ENCODE measurements at regions of chr15 and their contacts with region 1.

Region 1: DNA sequence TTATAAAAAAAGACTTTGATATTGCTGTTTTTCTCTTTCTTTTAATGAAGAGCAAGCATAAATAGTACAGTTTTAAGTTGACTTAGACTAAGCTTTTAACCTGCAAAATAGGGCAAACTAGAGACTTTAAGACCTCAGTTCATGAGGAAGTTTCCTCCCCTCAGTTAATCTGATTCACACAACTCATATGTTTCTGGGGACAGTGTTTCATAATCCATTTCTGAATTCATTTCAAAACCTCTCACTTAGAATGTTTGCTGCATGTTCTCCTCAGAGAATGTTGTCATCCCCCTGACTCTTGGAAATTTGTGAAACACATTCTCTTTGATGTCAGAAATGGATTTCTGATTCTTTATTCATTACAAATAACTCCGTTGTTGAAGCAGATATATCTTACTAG is 79.3 kb upstream of the SKOR1 start:
- DNase-seq: peak; percentile 24

Region 2: GRCh38 chr15:67065444-67066093 is 680.5 kb before region 1 on chr15 and contains the start of gene SMAD3:
- in situ Hi-C with region 1: no loop called
- DNase-seq: peak; percentile 94

Region 3: GRCh38 chr15:67685008-67685599 is 60.9 kb before region 1 on chr15:
- in situ Hi-C with region 1: loop called (anchors 10 kb)
- DNase-seq: peak; percentile 64

Measured in KBM-7 (cell line).